OCI-LY7 (cell line): ENCODE measurements at regions of chr18 and their contacts with region 1.

Region 1: DNA sequence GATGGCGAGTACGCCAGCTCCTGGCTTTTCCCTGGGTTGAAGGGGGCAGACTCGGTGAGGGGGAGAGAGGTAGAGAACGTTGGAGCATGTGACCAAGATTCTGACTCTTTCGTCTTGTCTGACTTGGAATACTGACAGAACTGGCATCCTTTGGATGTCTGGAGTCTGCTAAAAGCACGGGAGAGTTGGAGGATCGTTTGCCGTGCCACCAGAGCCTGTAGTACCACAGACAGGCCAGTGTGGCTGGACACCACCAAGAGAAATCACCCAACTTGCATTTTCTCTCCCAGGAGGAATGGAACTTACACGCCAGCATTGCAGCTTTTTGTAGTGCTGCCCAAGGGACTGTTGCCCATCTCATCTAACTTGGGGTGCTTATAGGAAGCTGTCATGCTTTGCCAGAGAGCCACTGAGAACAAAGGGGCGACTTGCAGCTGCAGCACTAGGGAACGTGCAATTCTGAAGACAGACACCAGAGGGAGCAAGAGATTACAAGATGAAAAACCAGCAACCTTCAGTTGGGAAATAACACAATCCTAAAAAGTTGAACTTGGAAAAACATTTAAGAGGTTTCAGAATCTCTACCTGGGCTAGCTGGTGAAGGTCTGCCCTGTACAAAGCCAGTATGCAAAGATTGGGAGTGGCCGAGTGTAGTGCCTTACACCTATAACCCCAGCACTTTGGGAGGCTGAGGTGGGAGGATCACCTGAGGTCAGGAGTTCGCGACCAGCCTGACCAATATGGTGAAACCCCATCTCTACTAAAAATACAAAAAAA is 24.1 kb downstream of the PSMG2 start:
- DNase-seq: peak; percentile 76
- H3K4me3 ChIP-seq: no peak overlapping the region
- H3K27ac ChIP-seq: no peak overlapping the region
- H3K4me1 ChIP-seq: peaks cover 8% of the 10 kb centered on the region
- CTCF ChIP-seq: peak; percentile 96

Region 2: DNA sequence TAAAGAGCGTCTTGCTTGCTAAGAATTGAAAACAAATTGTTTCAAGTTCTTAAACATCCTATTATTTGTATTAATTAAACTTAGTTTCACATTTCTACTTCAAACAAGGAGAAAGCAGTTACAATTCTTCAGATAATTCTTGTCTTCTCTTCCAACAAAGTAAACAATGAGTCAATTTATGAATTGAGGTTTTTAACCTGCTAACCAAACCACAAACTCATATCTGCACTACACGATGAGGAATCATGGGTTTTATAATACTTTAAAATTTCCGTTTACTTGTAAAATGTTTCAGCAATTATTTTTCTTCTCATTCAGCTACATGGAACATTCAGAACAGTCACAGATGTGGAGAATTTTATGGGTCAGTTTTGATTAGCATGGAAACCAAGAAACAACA is 183.3 kb before region 1 on chr18:
- CTCF ChIA-PET with region 1: no interaction called
- POLR2A ChIA-PET with region 1: no interaction called
- intact Hi-C with region 1: no loop called
- DNase-seq: no peak
- H3K4me3 ChIP-seq: no peak overlapping the region
- H3K27ac ChIP-seq: no peak overlapping the region
- H3K4me1 ChIP-seq: no peaks in the 10 kb centered on the region
- CTCF ChIP-seq: no peak

Region 3: DNA sequence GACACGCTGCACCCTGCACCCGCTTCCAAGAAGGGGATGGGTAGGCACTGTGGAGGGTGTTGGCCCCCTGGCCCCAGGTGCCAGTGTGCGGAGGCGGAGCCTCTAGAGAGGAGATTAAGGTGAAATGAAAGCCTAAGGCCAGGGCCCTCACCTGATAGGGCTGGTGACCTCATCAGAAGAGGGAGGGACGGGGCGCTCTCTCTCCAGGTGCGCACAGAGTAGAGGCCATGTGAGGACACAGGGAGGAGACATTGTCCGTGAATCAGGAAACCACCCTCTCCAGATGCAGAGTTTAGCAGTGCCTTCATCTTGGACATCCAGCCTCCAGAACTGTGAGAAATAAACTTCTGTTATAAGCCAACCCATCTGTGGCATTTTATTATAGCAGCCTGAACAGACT is 38.2 kb after region 1 on chr18:
- CTCF ChIA-PET with region 1: no interaction called
- POLR2A ChIA-PET with region 1: no interaction called
- intact Hi-C with region 1: no loop called
- DNase-seq: no peak
- H3K4me3 ChIP-seq: no peak overlapping the region
- H3K27ac ChIP-seq: no peak overlapping the region
- H3K4me1 ChIP-seq: no peaks in the 10 kb centered on the region
- CTCF ChIP-seq: no peak

Region 4: GRCh38 chr18:13103366-13103765 is 376.4 kb after region 1 on chr18:
- CTCF ChIA-PET with region 1: no interaction called
- POLR2A ChIA-PET with region 1: no interaction called
- intact Hi-C with region 1: loop called (anchors 10 kb)
- DNase-seq: peak; percentile 11
- H3K4me3 ChIP-seq: no peak overlapping the region
- H3K27ac ChIP-seq: no peak overlapping the region
- H3K4me1 ChIP-seq: no peaks in the 10 kb centered on the region
- CTCF ChIP-seq: peak; percentile 69

Region 5: GRCh38 chr18:13232086-13232917 is 505.3 kb after region 1 on chr18:
- CTCF ChIA-PET with region 1: no interaction called
- POLR2A ChIA-PET with region 1: no interaction called
- intact Hi-C with region 1: no loop called
- DNase-seq: no peak
- H3K4me3 ChIP-seq: no peak overlapping the region
- H3K27ac ChIP-seq: no peak overlapping the region
- H3K4me1 ChIP-seq: no peaks in the 10 kb centered on the region
- CTCF ChIP-seq: no peak